Posterior cingulate gyrus (tissue), 11 donors: ENCODE measurements at regions of chr1 and their contacts with region 1.

Region 1: GRCh38 chr1:94801919-94802546 is 18.1 kb upstream of the SLC44A3 start:
- DNase-seq: peak in 5 of 10 donors; percentile 25 to 84 (median 71)

Region 2: GRCh38 chr1:94481473-94481933 is 320.5 kb before region 1 on chr1:
- intact Hi-C with region 1: loop called (anchors 1 kb)
- DNase-seq: peak in 6 of 10 donors; percentile 6 to 83 (median 26)

Region 3: DNA sequence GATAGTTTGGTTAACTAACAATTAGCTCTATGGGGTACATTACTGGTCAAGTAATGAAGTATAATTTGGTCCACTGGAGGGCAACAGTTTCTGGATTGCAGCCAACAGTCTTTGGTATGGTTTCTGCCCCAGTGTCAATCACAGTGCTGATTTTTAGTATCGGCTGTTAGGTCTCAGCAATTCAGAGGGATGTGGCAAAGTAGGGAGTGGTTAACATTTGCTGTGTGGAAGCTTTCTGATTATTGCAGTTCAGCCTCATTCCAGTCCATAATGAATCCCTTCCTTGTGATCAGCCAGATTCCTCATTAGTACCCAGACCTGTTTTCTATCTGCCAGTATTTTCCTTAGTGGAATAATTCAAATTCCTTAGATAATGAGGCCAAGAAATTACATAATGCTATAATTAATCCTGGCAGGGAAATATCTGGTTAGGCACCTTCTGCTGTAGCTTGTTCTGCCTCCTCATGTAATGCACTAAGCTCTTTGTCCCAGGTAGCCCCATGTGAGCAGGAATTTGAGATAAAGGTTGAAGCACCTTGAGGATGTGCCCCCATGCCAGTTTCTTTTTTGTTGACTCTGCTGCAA is 274.5 kb before region 1 on chr1:
- intact Hi-C with region 1: loop called (anchors 5 kb)
- DNase-seq: no peak

Region 4: GRCh38 chr1:95043141-95043980 is 241.3 kb after region 1 on chr1:
- intact Hi-C with region 1: loop called (anchors 5 kb)
- DNase-seq: peak; percentile 66 to 97 (median 83)